Activated T-helper 1 cell treated with anti-CD3 and anti-CD28 coated beads, Interleukin-12 subunit alpha, Interleukin-12 subunit beta, Interleukin-2, Interleukin-4 antibody, amounts not matched to agents 30 ng/mL and 10 ng/mL and 1 ng/mL, durations not matched to agents 14 hours and 24 hours and 36 hours (primary cell): ENCODE measurements at regions of chr5 and their contacts with region 1.

Region 1: DNA sequence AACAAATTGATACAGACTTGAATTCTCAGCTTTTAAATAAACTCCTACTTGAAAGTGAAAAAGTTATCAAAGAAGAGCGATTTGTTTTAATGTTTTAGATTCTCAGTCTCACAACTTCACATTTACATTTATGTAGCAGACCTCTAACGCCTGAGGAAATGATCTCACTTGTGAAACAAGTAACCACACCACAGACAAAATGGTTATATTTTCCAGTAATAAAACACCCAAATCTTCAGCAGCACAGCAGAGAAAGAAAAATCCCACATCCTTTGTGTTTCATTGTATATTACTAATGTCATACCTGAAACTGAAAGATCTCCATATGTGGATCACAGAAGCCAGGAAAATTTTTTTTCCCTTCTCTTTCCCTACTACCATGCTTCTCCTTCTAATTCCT is 29.8 kb upstream of the GZMA start:
- DNase-seq: peak; percentile 31
- H3K4me3 Mint-ChIP-seq: peak overlapping the region; percentile 57
- H3K27ac Mint-ChIP-seq: peak overlapping the region; percentile 88
- H3K4me1 Mint-ChIP-seq: peaks cover 53% of the 10 kb centered on the region
- H3K27me3 Mint-ChIP-seq: no peaks in the 10 kb centered on the region

Region 2: DNA sequence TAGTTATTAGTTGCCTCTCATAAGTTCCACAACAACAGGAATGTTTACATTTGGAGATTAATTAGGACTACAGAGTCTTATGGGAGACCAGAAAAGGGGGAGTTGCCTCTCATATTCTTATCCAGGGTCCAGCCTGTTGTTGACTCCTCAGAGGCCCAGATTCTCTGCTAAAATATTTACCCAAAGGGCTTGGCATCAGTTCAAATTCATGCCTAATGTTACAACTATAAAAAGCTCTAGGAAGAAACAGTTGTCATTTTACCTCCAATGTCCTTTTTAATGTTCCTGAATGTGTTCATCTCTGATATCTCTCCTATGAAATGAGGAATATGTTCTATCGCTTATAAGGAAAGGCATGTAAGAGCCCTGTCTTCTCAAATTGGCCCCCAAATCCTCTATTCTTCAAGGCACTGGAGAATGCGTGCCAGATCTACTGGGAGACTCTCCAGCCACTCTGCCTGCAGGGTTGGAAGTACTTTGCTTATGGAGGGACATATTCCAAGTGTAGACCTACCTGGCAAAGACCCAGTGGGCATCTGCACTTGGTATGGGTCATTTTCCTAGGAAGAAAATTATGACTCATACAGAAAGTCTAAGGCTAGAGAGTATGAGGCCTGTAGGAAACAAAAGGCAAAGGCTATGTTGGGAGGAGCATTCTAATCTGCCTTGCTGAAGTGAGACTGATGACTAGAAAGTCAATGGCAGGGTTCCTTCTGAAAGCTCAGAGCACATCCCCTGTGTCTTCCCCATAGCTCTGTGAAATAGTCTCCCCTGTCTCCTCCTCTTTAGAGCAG is 279.9 kb before region 1 on chr5:
- intact Hi-C with region 1: loop called (anchors 2 kb)
- DNase-seq: no peak
- H3K4me3 Mint-ChIP-seq: peak overlapping the region; percentile 32
- H3K27ac Mint-ChIP-seq: peak overlapping the region; percentile 91
- H3K4me1 Mint-ChIP-seq: peaks cover 47% of the 10 kb centered on the region
- H3K27me3 Mint-ChIP-seq: peaks cover 3% of the 10 kb centered on the region

Region 3: DNA sequence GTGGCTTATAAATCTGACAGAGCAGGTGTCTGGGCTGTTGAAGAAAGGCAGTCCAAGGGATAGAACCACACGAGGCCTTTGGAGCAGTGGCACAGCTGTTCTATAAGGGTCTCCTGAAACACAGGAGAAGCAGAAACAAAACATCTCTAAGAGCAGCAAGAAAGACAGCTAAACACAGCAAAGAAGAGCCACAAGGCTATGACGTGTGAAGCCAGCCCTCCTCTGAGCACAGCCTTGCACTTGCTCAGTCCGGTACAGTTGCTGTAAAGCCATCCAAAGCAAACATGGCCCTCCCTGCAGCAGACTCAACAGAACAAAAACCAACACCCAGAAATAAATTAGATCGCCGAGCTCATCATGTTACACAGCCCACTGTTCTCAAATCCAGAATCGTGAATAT is 51.3 kb before region 1 on chr5:
- intact Hi-C with region 1: loop called (anchors 1 kb)
- DNase-seq: no peak
- H3K4me3 Mint-ChIP-seq: no peak overlapping the region
- H3K27ac Mint-ChIP-seq: no peak overlapping the region
- H3K4me1 Mint-ChIP-seq: peaks cover 52% of the 10 kb centered on the region
- H3K27me3 Mint-ChIP-seq: no peaks in the 10 kb centered on the region

Region 4: GRCh38 chr5:55062039-55062779 is 10.5 kb before region 1 on chr5:
- intact Hi-C with region 1: loop called (anchors 1 kb)
- DNase-seq: peak; percentile 79
- H3K4me3 Mint-ChIP-seq: peak overlapping the region; percentile 79
- H3K27ac Mint-ChIP-seq: peak overlapping the region; percentile 98
- H3K4me1 Mint-ChIP-seq: peaks cover 83% of the 10 kb centered on the region
- H3K27me3 Mint-ChIP-seq: peaks cover 1% of the 10 kb centered on the region

Region 5: DNA sequence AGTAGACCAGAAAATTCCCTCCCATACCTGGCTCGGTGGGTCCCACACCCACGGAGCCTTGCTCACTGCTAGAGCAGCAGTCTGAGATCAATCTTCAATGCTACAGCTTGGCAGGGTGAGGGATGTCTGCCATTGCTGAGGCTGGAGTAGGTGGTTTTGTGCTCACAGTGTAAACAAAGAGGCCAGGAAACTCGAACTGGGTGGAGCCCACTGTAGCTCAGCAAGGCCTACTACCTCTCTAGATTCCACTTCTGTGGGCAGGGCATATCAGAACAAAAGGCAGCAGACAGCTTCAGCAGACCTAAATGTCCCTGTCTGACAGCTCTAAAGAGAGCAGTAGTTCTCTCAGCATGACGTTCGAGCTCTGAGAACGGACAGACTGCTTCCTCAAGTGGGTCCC is 24.2 kb after region 1 on chr5:
- intact Hi-C with region 1: loop called (anchors 1 kb)
- DNase-seq: peak; percentile 51
- H3K4me3 Mint-ChIP-seq: peak overlapping the region; percentile 64
- H3K27ac Mint-ChIP-seq: peak overlapping the region; percentile 98
- H3K4me1 Mint-ChIP-seq: peaks cover 88% of the 10 kb centered on the region
- H3K27me3 Mint-ChIP-seq: no peaks in the 10 kb centered on the region

Region 6: DNA sequence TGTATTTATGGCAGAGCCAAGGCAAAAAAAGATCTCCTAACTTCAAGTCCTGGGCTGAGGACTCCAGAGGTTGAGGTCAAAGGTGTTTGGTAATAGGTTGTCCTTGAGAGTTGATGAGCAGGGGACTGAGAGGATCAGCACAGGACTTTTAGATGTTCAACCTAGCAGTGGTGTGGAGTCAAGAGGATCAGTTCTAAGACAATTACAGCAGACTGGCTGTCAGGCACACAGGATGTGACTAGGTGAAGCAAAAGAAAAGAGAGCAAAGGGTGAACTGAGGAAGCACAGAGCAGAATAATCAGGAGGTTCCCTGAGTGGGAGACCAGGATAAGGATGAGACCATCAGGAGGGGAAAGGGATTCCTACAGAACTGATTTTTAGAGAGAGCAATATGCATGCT is 40.7 kb after region 1 on chr5:
- intact Hi-C with region 1: no loop called
- DNase-seq: no peak
- H3K4me3 Mint-ChIP-seq: peak overlapping the region; percentile 4
- H3K27ac Mint-ChIP-seq: peak overlapping the region; percentile 15
- H3K4me1 Mint-ChIP-seq: peaks cover 42% of the 10 kb centered on the region
- H3K27me3 Mint-ChIP-seq: peaks cover 6% of the 10 kb centered on the region

Region 7: DNA sequence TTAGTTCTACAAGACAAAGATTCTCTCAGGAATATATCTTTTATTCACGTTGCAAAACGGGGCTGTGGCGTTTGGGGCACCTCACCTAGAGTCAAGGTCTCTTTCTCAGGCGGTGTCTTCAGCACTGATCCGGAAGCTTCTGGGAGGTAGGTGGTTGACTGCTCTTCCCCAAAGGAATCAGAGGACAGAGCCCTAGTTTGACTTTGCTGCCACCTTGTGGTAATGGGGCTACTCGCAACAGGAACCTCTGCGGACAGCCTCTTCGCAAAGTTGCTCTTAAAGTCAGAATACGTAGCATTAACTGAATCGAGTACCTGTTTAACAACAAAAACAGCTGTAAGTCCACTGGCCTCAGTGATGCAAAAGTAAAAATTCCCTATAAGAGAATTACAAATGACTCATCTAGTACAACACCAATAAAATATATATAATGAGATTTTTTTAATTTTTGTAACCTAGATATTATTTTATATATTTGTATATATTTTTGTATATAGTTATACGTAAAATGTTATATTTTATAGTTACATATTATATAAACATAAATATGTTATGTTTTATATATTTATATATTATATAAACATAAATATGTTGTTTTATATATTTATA is 74.0 kb after region 1 on chr5:
- intact Hi-C with region 1: loop called (anchors 2 kb)
- DNase-seq: peak; percentile 82
- H3K4me3 Mint-ChIP-seq: peak overlapping the region; percentile 20
- H3K27ac Mint-ChIP-seq: no peak overlapping the region
- H3K4me1 Mint-ChIP-seq: peaks cover 31% of the 10 kb centered on the region
- H3K27me3 Mint-ChIP-seq: peaks cover 17% of the 10 kb centered on the region